CD14-positive monocyte (primary cell): ENCODE measurements at regions of chr9 and their contacts with region 1.

Region 1: DNA sequence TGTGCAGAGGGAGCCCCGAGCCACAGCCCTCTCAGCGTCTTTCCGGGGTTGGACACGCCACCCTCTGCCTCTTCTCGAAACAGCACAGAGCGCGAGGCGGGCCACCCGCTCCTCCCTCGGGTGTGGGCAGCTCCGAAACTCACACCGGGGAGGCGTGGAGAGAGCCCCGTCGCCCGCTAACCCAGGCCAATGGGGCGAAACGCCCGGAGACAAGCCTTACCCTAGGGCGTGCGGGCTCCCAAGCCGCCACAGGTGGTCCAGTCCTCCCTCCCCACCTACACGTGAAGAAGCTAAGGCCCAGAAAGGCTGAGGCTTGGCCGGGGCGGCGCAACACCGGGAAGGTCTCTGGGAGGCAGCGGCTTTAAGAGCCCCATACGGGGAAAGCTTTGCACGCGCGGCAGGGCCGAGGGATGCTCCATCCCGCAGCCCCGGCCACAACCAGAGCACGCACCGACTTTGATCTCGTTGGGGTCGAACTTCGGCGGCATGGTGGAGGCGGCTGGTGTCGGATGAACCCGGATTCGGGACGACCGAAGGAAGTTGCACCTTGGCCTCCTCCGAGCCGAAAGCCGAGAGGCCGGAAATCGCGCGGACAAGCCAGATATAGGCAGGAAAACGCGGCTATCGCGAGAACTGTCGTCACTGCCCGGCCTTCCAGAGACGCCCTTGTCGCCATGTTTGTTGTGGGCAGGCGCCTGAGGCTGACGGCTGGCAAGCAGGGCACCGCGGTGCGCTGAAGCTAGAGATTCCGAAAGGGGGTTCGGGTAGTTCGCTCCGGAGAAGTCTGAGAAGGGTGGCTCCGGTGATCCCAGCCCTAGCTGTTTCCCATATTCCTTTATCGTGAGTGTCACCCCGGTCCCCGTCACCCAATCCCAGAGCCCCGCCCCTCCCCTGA is at the starts of genes LRSAM1 and RPL12:
- DNase-seq: peak; percentile 95 to 96 (median 95)
- H3K4me3 ChIP-seq: peak within 1 kb of the TSS; percentile 69 to 97 (median 76)
- H3K4me3 Mint-ChIP-seq: peak within 1 kb of the TSS; percentile 93 to 97
- H3K27ac ChIP-seq: peak within 1 kb of the TSS; percentile 78 to 91
- H3K27ac Mint-ChIP-seq: peak within 1 kb of the TSS; percentile 92 to 96 (median 96)
- H3K4me1 ChIP-seq: peaks cover 51 to 56% of the 10 kb centered on the region in 2 donors
- H3K4me1 Mint-ChIP-seq: peaks cover 51% of the 10 kb centered on the region
- H3K27me3 ChIP-seq: no peaks in the 10 kb centered on the region
- H3K27me3 Mint-ChIP-seq: peaks cover 0 to 1% (median 0%) of the 10 kb centered on the region in 3 donors
- CTCF ChIP-seq: no peak
- polyA plus RNA-seq, gene LRSAM1: 6.0 to 19.8 (median 8.2) TPM
- polyA plus RNA-seq, gene RPL12: 417 to 1,509 (median 490) TPM

Region 2: GRCh38 chr9:127224178-127224882 is 226.7 kb before region 1 on chr9:
- intact Hi-C with region 1: loop called (anchors 10 kb)
- DNase-seq: peak; percentile 63 to 75 (median 72)
- H3K4me3 ChIP-seq: peak overlapping the region; percentile 28 to 77 (median 50)
- H3K4me3 Mint-ChIP-seq: peak overlapping the region; percentile 81 to 85
- H3K27ac ChIP-seq: peak overlapping the region in 1 of 2 donors; percentile 39
- H3K27ac Mint-ChIP-seq: peak overlapping the region in 6 of 7 donors; percentile 76 to 91 (median 82)
- H3K4me1 ChIP-seq: peaks cover 17 to 25% of the 10 kb centered on the region in 2 donors
- H3K4me1 Mint-ChIP-seq: peaks cover 21% of the 10 kb centered on the region
- H3K27me3 ChIP-seq: peaks cover 15 to 35% of the 10 kb centered on the region in 2 donors
- H3K27me3 Mint-ChIP-seq: peaks cover 37 to 51% (median 43%) of the 10 kb centered on the region in 3 donors
- CTCF ChIP-seq: no peak

Region 3: DNA sequence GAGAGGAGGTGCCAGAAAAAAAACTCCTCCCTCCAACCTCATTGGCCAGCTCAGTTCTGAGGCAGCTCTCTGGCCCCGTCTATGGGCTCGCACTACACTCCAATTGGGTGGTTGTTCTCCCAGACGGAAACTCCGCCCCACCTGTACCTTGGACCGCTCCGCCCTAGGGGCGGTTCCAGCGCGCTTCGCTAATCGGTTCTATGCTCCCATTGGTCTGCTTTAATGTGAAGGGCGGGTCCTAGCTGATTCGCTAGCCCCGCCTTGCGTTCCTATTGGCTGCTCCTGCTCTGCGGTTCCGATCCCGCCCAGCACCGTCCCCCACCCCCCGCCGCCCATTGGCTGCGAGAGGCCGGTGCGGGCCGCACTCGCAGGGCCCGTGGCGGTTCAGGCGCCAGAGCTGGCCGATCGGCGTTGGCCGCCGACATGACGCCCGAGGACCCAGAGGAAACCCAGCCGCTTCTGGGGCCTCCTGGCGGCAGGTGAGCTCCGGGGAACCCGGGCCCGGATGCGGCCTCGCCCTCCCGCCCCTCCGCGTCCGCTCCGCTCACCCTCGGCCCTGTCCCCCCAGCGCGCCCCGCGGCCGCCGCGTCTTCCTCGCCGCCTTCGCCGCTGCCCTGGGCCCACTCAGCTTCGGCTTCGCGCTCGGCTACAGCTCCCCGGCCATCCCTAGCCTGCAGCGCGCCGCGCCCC is 54.1 kb before region 1 on chr9 and contains the start of gene SLC2A8:
- intact Hi-C with region 1: loop called in 1 of 2 experiments (anchors 2 kb)
- DNase-seq: peak; percentile 99 to 100 (median 99)
- H3K4me3 ChIP-seq: peak within 1 kb of the TSS; percentile 42 to 72 (median 50)
- H3K4me3 Mint-ChIP-seq: peak within 1 kb of the TSS; percentile 84 to 89
- H3K27ac ChIP-seq: no peak within 1 kb of the TSS
- H3K27ac Mint-ChIP-seq: peak within 1 kb of the TSS in 3 of 7 donors; percentile 30 to 73 (median 71)
- H3K4me1 ChIP-seq: peaks cover 23 to 27% of the 10 kb centered on the region in 2 donors
- H3K4me1 Mint-ChIP-seq: peaks cover 21% of the 10 kb centered on the region
- H3K27me3 ChIP-seq: peaks cover 0 to 7% of the 10 kb centered on the region in 2 donors
- H3K27me3 Mint-ChIP-seq: peaks cover 12 to 29% (median 15%) of the 10 kb centered on the region in 3 donors
- CTCF ChIP-seq: no peak
- polyA plus RNA-seq, gene SLC2A8: 6.6 to 8.7 (median 6.6) TPM

Region 4: DNA sequence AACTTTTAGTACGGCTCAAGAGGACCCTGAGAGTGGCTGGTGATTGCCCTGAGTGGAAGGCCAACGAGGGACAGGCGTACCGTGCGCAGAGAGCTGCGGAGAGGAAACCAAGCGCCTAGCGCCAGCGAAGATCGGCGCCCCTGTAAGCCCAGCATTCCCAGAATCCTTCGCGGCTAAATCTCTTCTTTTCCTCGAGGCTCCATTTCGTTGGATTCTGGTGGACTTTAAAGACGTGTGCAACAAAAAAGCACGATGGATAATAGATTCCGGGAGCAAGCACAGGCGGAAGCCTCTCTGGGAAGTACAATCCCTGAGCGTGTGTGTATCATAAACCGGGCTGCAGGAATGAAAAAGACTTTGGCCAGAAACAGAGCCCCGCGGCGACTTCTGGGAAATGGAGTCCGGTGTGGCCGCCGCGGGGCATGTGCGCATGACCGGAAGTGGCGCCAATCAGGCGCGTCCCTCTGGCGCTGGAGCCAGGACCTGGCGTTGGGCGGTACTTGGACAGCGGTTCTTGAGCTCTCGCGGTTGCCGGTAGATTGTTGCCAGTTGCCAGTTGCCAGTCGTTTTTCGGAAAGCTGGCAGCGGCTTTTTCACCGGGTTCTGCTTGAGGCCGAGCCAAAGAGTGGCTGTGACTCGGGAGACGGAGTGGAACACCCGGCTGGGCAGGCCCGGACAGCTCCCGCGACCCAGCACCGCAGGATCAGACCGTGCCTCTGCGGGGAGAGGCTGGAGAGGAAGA is 27.0 kb before region 1 on chr9 and contains the start of gene ZNF79:
- intact Hi-C with region 1: loop called in 1 of 2 experiments (anchors 2 kb)
- DNase-seq: peak; percentile 84 to 88 (median 87)
- H3K4me3 ChIP-seq: peak within 1 kb of the TSS; percentile 71 to 88 (median 79)
- H3K4me3 Mint-ChIP-seq: peak within 1 kb of the TSS; percentile 96 to 99
- H3K27ac ChIP-seq: peak within 1 kb of the TSS; percentile 75 to 83
- H3K27ac Mint-ChIP-seq: peak within 1 kb of the TSS; percentile 92 to 98 (median 96)
- H3K4me1 ChIP-seq: peaks cover 31% of the 10 kb centered on the region in 2 donors
- H3K4me1 Mint-ChIP-seq: peaks cover 43% of the 10 kb centered on the region
- H3K27me3 ChIP-seq: no peaks in the 10 kb centered on the region
- H3K27me3 Mint-ChIP-seq: peaks cover 0 to 2% (median 2%) of the 10 kb centered on the region in 3 donors
- CTCF ChIP-seq: no peak
- polyA plus RNA-seq, gene ZNF79: 1.4 to 3.3 (median 2.0) TPM